Activated CD4-positive, alpha-beta T cell treated with anti-CD3 and anti-CD28 coated beads for 36 hours (primary cell): ENCODE measurements at regions of chr4 and their contacts with region 1.

Region 1: DNA sequence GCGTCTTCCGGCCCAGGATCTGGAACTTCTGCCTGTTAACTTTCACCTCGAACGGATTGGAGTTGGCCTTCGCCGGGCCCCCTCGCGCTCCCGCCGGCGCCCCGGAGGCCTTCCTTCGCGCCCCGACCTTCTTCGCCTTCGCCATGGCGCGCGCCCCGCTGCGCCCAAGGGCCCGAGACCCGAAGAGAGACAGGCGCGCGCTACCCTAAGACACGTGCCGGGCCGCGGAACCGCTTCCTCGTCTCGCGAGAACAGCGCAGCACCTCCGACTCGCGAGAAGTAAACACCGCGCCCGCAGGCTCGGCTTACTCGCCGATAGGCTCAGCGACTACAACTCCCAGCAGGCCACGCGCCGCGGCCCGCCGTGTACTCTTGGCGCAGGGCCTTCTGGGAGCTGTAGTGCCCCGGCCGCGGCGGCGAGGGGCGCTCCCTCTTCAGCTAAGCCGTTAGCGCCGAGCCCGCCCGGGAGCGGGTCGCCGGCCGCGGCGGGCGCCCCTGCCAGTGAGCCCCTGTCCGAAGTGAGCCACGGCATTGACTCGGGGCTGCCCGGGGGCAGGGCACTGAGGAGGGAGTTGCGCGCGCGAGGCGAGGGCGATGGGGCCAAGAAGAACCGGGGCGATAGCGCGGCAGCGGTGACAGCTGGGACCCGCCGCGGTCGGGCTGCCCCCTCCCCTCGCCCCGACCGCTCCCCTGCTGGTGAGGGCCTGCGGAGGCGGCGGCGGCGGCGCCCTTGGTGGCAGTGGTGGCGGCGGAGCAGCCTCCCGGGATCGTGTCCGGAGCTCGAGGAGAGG is at the starts of genes GRK4 and NOP14:
- DNase-seq: peak; percentile 99
- ATAC-seq: peak; percentile 87
- H3K4me3 Mint-ChIP-seq: peak within 1 kb of the TSS; percentile 83
- H3K27ac Mint-ChIP-seq: peak within 1 kb of the TSS; percentile 86
- H3K4me1 Mint-ChIP-seq: peaks cover 34% of the 10 kb centered on the region
- H3K27me3 Mint-ChIP-seq: no peaks in the 10 kb centered on the region
- total RNA-seq, gene GRK4: 2.4 to 2.5 TPM
- total RNA-seq, gene NOP14: 86.8 to 106 TPM

Region 2: GRCh38 chr4:2008875-2009703 is 954.3 kb before region 1 on chr4 and contains the start of gene NELFA:
- CTCF ChIA-PET with region 1: no interaction called
- POLR2A ChIA-PET with region 1: no interaction called
- intact Hi-C with region 1: loop called in 1 of 2 experiments (anchors 2 kb)
- DNase-seq: peak; percentile 97
- ATAC-seq: peak; percentile 81
- H3K4me3 Mint-ChIP-seq: peak within 1 kb of the TSS; percentile 87
- H3K27ac Mint-ChIP-seq: peak within 1 kb of the TSS; percentile 90
- H3K4me1 Mint-ChIP-seq: peaks cover 34% of the 10 kb centered on the region
- H3K27me3 Mint-ChIP-seq: no peaks in the 10 kb centered on the region
- total RNA-seq, gene NELFA: 41.6 to 48.3 TPM

Region 3: DNA sequence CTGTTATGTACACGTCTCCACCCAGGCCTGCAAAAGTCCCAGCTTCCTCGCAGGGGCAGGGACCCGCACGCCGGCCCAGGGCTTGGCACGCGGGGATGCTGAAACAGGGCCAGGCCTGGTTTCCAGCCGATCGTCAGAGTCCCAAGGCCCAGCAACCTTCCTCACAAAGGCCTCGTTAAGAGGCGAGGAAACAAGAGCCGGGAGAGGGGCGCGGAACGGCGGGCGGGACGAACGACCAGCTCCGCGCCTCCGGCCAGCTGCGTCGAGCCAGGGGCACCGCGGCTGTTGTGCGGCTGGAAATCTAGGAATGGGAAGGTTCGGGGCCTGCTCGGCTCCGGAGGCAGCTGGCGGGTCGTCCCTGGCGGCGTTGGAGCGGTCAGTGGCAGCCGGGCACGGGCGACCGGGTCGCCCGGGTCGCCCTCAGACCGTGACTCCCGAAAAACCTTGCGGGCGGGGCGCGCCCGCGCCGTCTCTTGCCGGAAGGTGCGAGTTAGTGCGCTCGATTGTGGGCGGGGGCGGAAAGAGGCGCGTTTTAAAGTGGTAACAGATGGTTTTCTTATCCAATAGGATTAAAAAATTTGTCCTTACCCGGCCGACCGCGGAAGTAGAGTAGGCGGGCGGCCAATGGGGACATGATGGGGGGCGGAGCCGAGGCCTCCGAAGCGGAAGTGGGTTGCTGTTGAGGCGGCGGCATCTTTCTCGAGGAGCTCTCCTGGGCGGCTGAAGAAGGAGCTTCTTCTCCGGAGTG is 494.8 kb before region 1 on chr4 and contains the start of gene RNF4:
- CTCF ChIA-PET with region 1: no interaction called
- POLR2A ChIA-PET with region 1: no interaction called
- intact Hi-C with region 1: loop called in 1 of 2 experiments (anchors 1 kb)
- DNase-seq: peak; percentile 98
- ATAC-seq: peak; percentile 86
- H3K4me3 Mint-ChIP-seq: peak within 1 kb of the TSS; percentile 99
- H3K27ac Mint-ChIP-seq: peak within 1 kb of the TSS; percentile 93
- H3K4me1 Mint-ChIP-seq: peaks cover 42% of the 10 kb centered on the region
- H3K27me3 Mint-ChIP-seq: no peaks in the 10 kb centered on the region
- total RNA-seq, gene RNF4: 87.5 to 94.1 TPM

Region 4: GRCh38 chr4:2761035-2761923 is 202.1 kb before region 1 on chr4:
- CTCF ChIA-PET with region 1: interaction called, 8 read pairs
- POLR2A ChIA-PET with region 1: no interaction called
- intact Hi-C with region 1: loop called in 1 of 2 experiments (anchors 1 kb)
- DNase-seq: peak; percentile 59
- ATAC-seq: peak; percentile 9
- H3K4me3 Mint-ChIP-seq: no peak overlapping the region
- H3K27ac Mint-ChIP-seq: no peak overlapping the region
- H3K4me1 Mint-ChIP-seq: peaks cover 11% of the 10 kb centered on the region
- H3K27me3 Mint-ChIP-seq: no peaks in the 10 kb centered on the region

Region 5: DNA sequence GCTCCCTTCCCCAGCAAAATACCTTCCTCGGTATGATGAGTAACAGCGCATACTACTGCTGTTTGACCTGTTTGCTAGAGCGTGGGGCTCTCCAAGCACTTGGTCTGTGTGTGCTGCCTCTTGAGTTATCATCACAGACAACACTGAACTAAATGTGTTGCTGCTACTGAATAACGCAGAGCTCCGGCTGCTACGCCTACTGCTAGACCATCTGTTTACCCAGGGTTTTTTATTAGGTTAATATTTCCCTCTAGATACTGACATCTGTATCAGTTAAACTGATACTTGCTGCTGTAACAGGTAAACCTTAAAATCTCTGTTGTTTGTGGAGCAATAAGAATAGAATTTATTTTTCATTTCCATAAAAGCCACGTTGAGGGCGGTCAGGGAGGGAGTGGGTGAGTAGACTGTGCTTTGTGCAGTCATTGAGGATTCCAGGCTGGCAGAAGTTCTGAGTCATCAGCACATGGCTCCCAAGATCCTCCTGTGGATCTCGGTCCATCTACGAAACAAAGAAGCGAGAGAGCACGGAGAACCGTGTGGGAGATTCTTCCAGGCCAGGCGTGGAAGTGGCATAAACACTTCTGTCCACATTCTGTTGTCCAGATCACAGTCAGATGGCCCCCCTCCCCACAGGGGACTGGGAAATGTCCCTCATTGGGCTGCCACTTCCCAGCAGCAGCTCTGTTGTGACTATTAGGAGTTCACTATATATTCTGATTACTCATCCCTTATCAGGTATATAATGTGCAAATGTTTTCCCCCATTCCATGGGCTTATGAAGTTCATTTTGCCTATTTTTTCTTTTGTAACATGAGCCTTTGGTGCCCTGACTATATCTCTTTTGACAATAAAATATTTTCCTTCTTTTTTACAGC is 14.1 kb after region 1 on chr4:
- CTCF ChIA-PET with region 1: interaction called, 22 read pairs
- POLR2A ChIA-PET with region 1: interaction called, 3 read pairs
- intact Hi-C with region 1: no loop called
- DNase-seq: no peak
- ATAC-seq: no peak
- H3K4me3 Mint-ChIP-seq: no peak overlapping the region
- H3K27ac Mint-ChIP-seq: no peak overlapping the region
- H3K4me1 Mint-ChIP-seq: no peaks in the 10 kb centered on the region
- H3K27me3 Mint-ChIP-seq: peaks cover 3% of the 10 kb centered on the region

Region 6: GRCh38 chr4:3201718-3202702 is 238.6 kb after region 1 on chr4:
- CTCF ChIA-PET with region 1: no interaction called
- POLR2A ChIA-PET with region 1: no interaction called
- intact Hi-C with region 1: no loop called
- DNase-seq: peak; percentile 82
- ATAC-seq: peak; percentile 92
- H3K4me3 Mint-ChIP-seq: peak overlapping the region; percentile 41
- H3K27ac Mint-ChIP-seq: peak overlapping the region; percentile 82
- H3K4me1 Mint-ChIP-seq: peaks cover 49% of the 10 kb centered on the region
- H3K27me3 Mint-ChIP-seq: no peaks in the 10 kb centered on the region

Region 7: GRCh38 chr4:3280466-3280865 is 317.1 kb after region 1 on chr4:
- CTCF ChIA-PET with region 1: no interaction called
- POLR2A ChIA-PET with region 1: no interaction called
- intact Hi-C with region 1: no loop called
- DNase-seq: no peak
- ATAC-seq: no peak
- H3K4me3 Mint-ChIP-seq: no peak overlapping the region
- H3K27ac Mint-ChIP-seq: no peak overlapping the region
- H3K4me1 Mint-ChIP-seq: no peaks in the 10 kb centered on the region
- H3K27me3 Mint-ChIP-seq: no peaks in the 10 kb centered on the region

Region 8: DNA sequence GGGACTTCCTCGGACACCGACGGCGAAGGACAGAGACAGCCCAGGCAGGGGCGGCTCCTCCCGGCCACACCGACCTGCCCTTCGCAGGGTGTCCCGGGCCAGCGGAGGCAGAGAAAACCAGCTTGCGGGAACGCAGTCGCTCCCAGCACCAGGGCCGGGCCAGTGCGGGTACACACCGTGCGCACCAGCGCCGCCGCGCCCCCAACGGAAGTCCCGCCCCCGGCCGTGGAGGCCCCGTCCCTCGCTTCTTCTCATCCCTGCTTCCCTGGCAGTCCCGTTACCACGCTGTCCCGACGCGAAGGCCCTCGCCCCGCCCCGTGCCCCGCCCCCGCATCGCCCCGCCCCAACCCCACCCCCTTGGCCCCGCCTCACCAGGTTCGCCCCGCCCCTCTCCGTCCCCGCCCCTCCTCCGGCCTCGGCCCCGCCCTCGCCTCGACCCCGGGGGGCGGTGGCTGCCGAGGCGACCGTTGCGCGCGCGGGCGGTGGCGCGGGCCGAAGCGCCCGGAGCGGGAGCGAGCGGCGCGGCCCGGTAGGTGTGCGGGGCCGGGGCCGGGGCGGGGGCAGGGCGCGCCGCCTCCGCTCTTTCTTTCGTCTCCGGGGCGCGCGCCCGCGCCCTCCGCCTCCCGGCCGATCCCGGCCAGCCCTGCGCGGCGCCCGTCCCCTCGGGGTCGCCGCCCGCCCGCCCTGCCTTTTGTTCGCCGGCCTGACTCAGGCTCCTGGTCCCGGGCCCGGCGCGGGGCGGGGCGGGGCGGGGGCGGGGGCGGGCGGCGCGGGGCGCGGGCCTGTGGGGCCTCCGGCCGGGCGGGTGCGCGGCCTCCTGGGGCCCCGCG is 329.4 kb after region 1 on chr4 and contains the start of gene RGS12:
- CTCF ChIA-PET with region 1: no interaction called
- POLR2A ChIA-PET with region 1: no interaction called
- intact Hi-C with region 1: loop called in 1 of 2 experiments (anchors 1 kb)
- DNase-seq: peak; percentile 93
- ATAC-seq: peak; percentile 95
- H3K4me3 Mint-ChIP-seq: peak within 1 kb of the TSS; percentile 81
- H3K27ac Mint-ChIP-seq: peak within 1 kb of the TSS; percentile 64
- H3K4me1 Mint-ChIP-seq: peaks cover 11% of the 10 kb centered on the region
- H3K27me3 Mint-ChIP-seq: peaks cover 4% of the 10 kb centered on the region
- total RNA-seq, gene RGS12: 8.0 to 9.4 TPM